ENCODE measurements at regions of chr11 and their contacts with region 1.

Region 1: GRCh38 chr11:64448599-64449556 is 89.9 kb downstream of the RPS6KA4 start:
- DNase-seq: peak; percentile 55
- H3K4me3 ChIP-seq: no peak overlapping the region
- H3K27ac ChIP-seq: no peak overlapping the region
- H3K4me1 ChIP-seq: peaks cover 2% of the 10 kb centered on the region
- H3K27me3 ChIP-seq: peaks cover 7% of the 10 kb centered on the region in 2 experiments
- CTCF ChIP-seq: peak; percentile 83 to 95
- POLR2A ChIP-seq: no peak

Region 2: DNA sequence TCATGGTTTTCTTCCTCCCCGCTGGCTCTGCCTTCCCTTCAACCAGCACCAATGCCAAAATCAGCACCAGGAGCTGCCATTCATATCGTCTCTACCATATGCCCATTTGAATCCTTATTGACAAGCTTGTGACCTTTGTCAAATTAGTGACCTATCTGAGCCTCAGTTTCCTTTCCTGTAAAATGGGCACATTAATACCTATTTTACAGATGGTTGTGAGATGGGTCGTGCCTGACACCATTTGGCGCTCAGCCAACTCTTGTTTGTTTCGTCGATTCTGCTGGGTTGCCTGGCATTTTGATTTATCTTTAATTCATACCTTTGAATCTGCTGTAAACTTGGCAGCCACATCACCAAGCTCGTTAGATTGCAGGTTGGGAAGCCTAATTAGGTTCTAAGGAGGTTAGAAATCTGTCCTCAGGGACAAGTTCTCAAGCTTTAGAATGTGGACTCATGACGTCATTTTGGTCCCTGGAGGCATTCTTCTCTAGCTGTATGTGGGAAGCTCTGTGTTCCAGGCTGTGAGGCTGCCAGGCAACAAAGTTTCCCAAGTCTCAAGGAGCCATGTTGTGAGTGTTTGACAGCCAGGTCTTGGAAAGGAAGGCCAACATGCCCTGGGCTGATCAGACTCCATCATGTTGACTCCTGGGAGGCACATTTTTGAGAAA is 28.9 kb before region 1 on chr11:
- CTCF ChIA-PET with region 1: interaction called, 11 read pairs
- POLR2A ChIA-PET with region 1: no interaction called
- dilution Hi-C with region 1: no loop called
- intact Hi-C with region 1: no loop called
- DNase-seq: no peak
- H3K4me3 ChIP-seq: no peak overlapping the region
- H3K27ac ChIP-seq: no peak overlapping the region
- H3K4me1 ChIP-seq: no peaks in the 10 kb centered on the region
- H3K27me3 ChIP-seq: peaks cover 0 to 15% of the 10 kb centered on the region in 2 experiments
- CTCF ChIP-seq: no peak
- POLR2A ChIP-seq: no peak

Region 3: GRCh38 chr11:64458997-64459396 is 10.1 kb after region 1 on chr11:
- CTCF ChIA-PET with region 1: interaction called, 13 read pairs
- POLR2A ChIA-PET with region 1: no interaction called
- dilution Hi-C with region 1: no loop called
- intact Hi-C with region 1: no loop called
- DNase-seq: no peak
- H3K4me3 ChIP-seq: no peak overlapping the region
- H3K27ac ChIP-seq: no peak overlapping the region
- H3K4me1 ChIP-seq: no peaks in the 10 kb centered on the region
- H3K27me3 ChIP-seq: peaks cover 0 to 5% of the 10 kb centered on the region in 2 experiments
- CTCF ChIP-seq: no peak
- POLR2A ChIP-seq: no peak

Region 4: GRCh38 chr11:64516226-64516625 is 67.3 kb after region 1 on chr11:
- CTCF ChIA-PET with region 1: interaction called, 10 read pairs
- POLR2A ChIA-PET with region 1: no interaction called
- dilution Hi-C with region 1: no loop called
- intact Hi-C with region 1: no loop called
- DNase-seq: no peak
- H3K4me3 ChIP-seq: no peak overlapping the region
- H3K27ac ChIP-seq: no peak overlapping the region
- H3K4me1 ChIP-seq: no peaks in the 10 kb centered on the region
- H3K27me3 ChIP-seq: peaks cover 4 to 15% of the 10 kb centered on the region in 2 experiments
- CTCF ChIP-seq: peak in 1 of 2 donors; percentile 11
- POLR2A ChIP-seq: no peak

Region 5: DNA sequence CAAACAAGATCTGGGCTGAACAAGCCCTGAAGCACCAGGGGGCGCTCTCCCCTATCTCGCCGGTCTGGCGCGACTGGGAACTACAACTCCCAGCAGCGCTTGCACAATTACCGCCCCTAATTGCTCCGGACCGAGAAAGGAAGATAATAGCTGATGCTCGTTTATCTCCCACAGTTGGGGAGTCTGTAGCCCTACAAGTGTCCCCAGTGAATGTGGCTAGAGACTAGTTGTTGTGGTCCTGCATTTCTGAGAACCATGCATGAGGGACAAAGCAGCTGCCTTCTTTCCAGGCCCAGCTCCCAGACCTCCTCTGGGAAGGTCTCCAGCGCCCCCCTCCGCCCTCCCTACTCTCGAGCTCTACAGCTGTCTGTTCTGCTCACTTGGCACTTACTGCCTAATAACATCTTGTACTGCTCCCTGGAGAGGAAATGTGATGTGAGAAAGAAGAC is 239.7 kb after region 1 on chr11:
- CTCF ChIA-PET with region 1: interaction called, 20 read pairs
- POLR2A ChIA-PET with region 1: no interaction called
- dilution Hi-C with region 1: no loop called
- intact Hi-C with region 1: no loop called
- DNase-seq: peak; percentile 92
- H3K4me3 ChIP-seq: peak overlapping the region in 2 of 3 experiments; percentile 29 to 40
- H3K27ac ChIP-seq: no peak overlapping the region
- H3K4me1 ChIP-seq: no peaks in the 10 kb centered on the region
- H3K27me3 ChIP-seq: peaks cover 11 to 19% of the 10 kb centered on the region in 2 experiments
- CTCF ChIP-seq: peak; percentile 89 to 94
- POLR2A ChIP-seq: no peak

Measured in endothelial cell of umbilical vein (primary cell).